Activated B cell treated with CpG ODN at 0.5 μM for 24 hours (primary cell): ENCODE measurements at regions of chr11 and their contacts with region 1.

Region 1: DNA sequence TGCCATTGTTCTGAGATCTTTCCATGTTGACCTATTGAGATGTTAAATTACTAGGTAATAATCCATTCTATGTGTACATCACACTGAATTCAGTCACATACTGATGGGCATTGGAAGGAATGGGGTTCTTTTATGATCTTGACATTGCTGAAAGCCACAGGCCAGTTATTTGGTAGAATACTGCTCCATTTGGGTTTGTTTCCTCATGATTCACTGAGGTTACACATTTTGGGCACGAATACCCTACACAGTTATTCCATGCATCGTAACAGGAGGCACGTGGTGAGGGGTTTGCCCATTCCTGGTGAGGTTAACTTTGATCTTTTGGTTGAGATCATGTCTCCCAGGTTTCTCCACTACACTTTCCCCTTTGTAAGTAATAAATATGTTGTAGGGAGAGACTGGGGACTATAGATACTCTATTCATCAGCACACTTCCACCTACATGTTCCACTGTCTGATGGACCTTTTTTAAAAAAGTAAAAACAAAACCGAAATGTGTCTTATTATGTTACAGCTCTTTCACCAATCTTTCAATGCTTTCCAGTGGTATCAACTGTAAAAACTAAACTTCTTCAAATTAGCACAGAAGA is 12.0 kb upstream of the FOLR1 start:
- DNase-seq: no peak
- ATAC-seq: no peak
- H3K4me3 Mint-ChIP-seq: no peak overlapping the region
- H3K27ac Mint-ChIP-seq: no peak overlapping the region
- H3K4me1 Mint-ChIP-seq: peaks cover 4% of the 10 kb centered on the region
- H3K27me3 Mint-ChIP-seq: peaks cover 22% of the 10 kb centered on the region
- CTCF ChIP-seq: no peak

Region 2: GRCh38 chr11:71060391-71060791 is 1119.5 kb before region 1 on chr11:
- CTCF ChIA-PET with region 1: no interaction called
- POLR2A ChIA-PET with region 1: no interaction called
- intact Hi-C with region 1: no loop called
- DNase-seq: no peak
- ATAC-seq: no peak
- H3K4me3 Mint-ChIP-seq: no peak overlapping the region
- H3K27ac Mint-ChIP-seq: no peak overlapping the region
- H3K4me1 Mint-ChIP-seq: no peaks in the 10 kb centered on the region
- H3K27me3 Mint-ChIP-seq: peaks cover 26% of the 10 kb centered on the region
- CTCF ChIP-seq: no peak

Region 3: DNA sequence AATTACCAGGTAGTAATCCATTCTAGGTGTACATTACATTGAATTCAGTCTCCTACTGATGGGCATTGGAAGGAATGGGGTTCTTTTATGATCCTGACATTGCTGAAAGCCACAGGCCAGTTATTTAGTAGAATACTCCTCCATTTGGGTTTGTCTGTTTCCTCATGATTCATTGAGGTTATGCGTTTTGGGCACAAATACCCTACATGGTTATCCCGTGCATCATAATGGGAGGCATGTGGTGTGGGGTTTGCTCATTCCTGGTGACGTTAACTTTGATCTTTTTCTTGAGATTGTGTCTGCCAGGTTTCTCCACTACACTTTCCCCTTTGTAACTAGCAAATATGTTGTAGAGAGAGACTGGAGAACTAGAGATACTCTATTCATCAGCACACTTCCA is 38.8 kb before region 1 on chr11:
- CTCF ChIA-PET with region 1: interaction called, 8 read pairs
- POLR2A ChIA-PET with region 1: no interaction called
- intact Hi-C with region 1: loop called (anchors 2 kb)
- DNase-seq: no peak
- ATAC-seq: no peak
- H3K4me3 Mint-ChIP-seq: no peak overlapping the region
- H3K27ac Mint-ChIP-seq: no peak overlapping the region
- H3K4me1 Mint-ChIP-seq: peaks cover 1% of the 10 kb centered on the region
- H3K27me3 Mint-ChIP-seq: peaks cover 17% of the 10 kb centered on the region
- CTCF ChIP-seq: no peak

Region 4: DNA sequence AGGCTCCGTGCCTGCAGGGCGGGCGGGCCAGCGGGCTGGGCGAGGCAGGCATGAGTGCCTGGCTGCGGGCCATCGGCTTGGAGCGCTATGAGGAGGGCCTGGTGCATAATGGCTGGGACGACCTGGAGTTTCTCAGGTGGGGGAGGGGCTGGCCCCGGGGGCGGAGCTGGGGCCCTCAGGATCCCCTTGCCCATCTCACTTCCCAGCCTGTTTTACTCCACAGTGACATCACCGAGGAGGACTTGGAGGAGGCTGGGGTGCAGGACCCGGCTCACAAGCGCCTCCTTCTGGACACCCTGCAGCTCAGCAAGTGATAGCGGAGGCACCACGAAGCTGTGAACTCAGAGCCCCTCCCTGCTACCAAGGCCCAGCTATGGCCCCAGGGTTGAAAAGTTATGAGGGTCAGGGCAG is 58.1 kb after region 1 on chr11:
- CTCF ChIA-PET with region 1: interaction called, 4 read pairs
- POLR2A ChIA-PET with region 1: no interaction called
- intact Hi-C with region 1: loop called (anchors 1 kb)
- DNase-seq: no peak
- ATAC-seq: peak; percentile 68
- H3K4me3 Mint-ChIP-seq: no peak overlapping the region
- H3K27ac Mint-ChIP-seq: no peak overlapping the region
- H3K4me1 Mint-ChIP-seq: peaks cover 41% of the 10 kb centered on the region
- H3K27me3 Mint-ChIP-seq: peaks cover 33% of the 10 kb centered on the region
- CTCF ChIP-seq: no peak